PC-9 (cell line): ENCODE measurements at regions of chr13 and their contacts with region 1.

Region 1: GRCh38 chr13:73995736-73996135 is 138.5 kb downstream of the KLF12 start:
- DNase-seq: no peak
- H3K4me3 ChIP-seq: no peak overlapping the region
- H3K27ac ChIP-seq: no peak overlapping the region
- H3K4me1 ChIP-seq: no peaks in the 10 kb centered on the region
- H3K27me3 ChIP-seq: no peaks in the 10 kb centered on the region
- CTCF ChIP-seq: no peak

Region 2: DNA sequence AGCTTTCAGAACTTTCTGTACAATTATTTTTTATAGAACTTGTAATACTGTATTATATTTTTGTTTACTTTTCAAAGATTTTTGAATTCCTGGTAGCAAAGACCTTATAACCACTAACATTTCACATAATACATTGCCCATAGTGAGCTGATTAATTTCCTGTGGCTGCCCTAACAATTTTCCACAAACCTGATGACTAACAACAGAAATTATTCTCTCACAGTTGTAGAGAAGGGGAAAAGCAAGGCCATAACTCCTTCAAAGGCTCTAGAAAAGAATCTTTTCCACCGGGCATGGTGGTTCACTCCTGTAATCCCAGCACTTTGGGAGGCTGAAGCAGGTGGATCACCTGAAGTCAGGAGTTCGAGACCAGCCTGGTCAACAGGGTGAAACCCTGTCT is 119.4 kb after region 1 on chr13:
- CTCF ChIA-PET with region 1: no interaction called
- POLR2A ChIA-PET with region 1: no interaction called
- intact Hi-C with region 1: no loop called
- DNase-seq: no peak
- H3K4me3 ChIP-seq: no peak overlapping the region
- H3K27ac ChIP-seq: no peak overlapping the region
- H3K4me1 ChIP-seq: no peaks in the 10 kb centered on the region
- H3K27me3 ChIP-seq: no peaks in the 10 kb centered on the region
- CTCF ChIP-seq: no peak

Region 3: DNA sequence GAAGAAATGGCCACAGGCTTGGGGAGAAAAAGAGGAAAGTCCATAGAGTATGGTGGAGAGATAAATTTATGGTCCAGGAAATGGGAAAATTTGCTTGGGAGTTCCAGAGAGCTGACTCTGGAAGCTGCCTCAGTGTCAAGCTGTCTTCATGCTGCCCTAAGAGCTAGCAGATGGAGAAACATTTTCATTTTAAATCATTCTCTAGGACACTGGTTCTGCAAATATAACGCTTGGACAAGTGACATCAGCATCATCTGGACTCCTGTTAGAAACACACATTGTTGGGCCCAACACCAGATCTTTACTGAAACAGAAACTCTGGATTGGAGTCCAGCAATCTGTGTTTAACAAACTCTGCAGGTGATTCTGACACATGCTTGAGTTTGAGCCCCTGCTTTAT is 730.5 kb after region 1 on chr13:
- CTCF ChIA-PET with region 1: interaction called, 12 read pairs
- POLR2A ChIA-PET with region 1: no interaction called
- intact Hi-C with region 1: no loop called
- DNase-seq: no peak
- H3K4me3 ChIP-seq: no peak overlapping the region
- H3K27ac ChIP-seq: no peak overlapping the region
- H3K4me1 ChIP-seq: no peaks in the 10 kb centered on the region
- H3K27me3 ChIP-seq: no peaks in the 10 kb centered on the region
- CTCF ChIP-seq: no peak